Esophagus squamous epithelium (tissue), 5 donors: ENCODE measurements at regions of chr13 and their contacts with region 1.

Region 1: DNA sequence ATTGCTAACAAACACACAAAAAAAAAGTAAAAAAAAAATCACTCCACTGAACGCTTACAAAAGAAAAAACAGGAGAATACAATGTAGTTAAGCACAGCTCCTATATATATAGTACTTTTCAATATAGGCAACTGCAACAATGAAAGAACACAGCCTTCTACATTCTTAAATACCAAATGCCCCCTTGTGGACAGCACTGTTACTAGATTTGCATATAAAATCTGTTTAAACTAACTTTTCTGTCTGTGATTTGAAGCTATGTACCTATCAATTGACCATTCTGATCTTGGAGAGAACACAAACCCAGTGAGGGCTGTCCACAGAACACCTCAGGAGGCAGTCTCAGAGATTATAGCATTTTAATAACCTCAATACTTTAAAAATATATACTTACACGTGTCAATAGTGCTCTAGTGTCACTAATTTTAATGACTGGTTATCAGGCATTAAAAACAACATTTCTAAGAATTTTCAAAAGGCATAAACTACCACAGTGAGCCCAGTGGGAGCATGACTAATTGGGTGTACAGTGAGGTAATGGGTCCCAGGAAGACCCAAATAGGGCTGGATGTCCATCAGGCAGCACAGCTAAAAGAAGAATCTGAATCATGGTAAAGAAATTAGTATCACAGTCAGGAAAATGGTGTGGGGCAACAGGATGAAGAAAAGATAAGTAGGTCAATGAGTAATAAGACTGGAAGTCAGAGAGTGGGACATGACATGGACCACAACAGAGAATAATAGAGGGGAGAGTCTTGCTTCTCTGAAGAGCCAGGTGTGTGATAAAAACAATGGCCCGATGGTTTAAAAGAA is 22.2 kb downstream of the CCDC169 start:
- DNase-seq: no peak
- H3K4me3 ChIP-seq: no peak overlapping the region
- H3K27ac ChIP-seq: no peak overlapping the region
- H3K4me1 ChIP-seq: no peaks in the 10 kb centered on the region
- H3K27me3 ChIP-seq: no peaks in the 10 kb centered on the region
- CTCF ChIP-seq: peak in 5 of 6 experiments; percentile 42 to 72 (median 53)
- POLR2A ChIP-seq: no peak

Region 2: DNA sequence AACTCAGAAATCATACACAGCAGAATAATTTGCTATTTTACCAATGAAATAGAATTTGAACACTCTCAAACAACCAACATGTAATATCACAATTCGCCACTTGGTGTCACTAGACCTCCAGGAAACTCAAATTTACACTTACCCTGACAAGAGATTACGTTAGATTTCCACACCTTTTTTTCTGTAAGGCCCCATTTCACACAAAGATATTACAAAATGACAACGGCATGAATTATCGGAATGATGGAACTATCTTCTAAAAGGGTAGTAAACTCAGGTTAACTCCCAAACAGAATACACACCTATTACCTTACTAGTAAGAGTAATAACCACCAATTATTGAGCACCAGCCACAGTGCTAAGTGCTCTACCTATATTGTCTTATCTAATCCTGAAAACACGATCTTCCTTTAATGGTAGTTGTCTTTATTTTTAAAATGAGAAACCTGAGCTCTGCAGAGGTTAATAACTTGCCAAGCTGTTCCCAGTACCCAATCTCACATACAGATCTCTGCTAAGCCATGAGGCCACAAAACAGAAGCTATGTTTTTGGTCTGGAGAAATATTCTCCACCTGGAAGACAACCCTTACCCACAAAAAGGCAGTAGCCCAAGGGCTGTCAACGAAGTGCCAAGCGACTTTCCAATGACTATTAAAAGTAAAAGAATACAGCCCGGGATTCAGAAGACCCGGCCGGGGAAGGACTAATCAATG is 296.6 kb before region 1 on chr13:
- intact Hi-C with region 1: loop called (anchors 2 kb)
- DNase-seq: no peak
- H3K4me3 ChIP-seq: no peak overlapping the region
- H3K27ac ChIP-seq: peak overlapping the region; percentile 56 to 82 (median 71)
- H3K4me1 ChIP-seq: peaks cover 0 to 19% (median 12%) of the 10 kb centered on the region in 3 donors
- H3K27me3 ChIP-seq: no peaks in the 10 kb centered on the region
- CTCF ChIP-seq: peak; percentile 35 to 88 (median 77)
- POLR2A ChIP-seq: no peak

Region 3: DNA sequence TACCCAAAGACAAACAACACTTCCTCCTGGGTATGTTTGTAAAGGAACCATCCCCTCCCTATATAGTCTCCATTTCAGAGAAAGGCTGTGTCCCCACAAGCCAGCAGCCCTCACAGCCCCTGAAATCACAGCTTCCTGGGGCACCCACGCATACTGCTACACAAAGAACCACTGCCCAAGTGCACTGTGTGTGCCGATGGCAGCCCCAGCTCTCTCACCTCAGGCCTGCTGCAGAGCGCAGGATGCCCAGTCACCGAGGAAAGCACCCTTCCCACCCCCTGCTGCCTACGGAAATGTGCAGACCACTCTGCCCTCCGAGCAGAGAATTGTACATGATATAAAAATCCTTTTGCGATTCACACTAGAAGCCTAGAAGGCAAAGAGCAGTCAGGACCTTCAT is 100.5 kb before region 1 on chr13:
- intact Hi-C with region 1: no loop called
- DNase-seq: no peak
- H3K4me3 ChIP-seq: no peak overlapping the region
- H3K27ac ChIP-seq: no peak overlapping the region
- H3K4me1 ChIP-seq: no peaks in the 10 kb centered on the region
- H3K27me3 ChIP-seq: peaks cover 0 to 8% (median 0%) of the 10 kb centered on the region in 4 donors
- CTCF ChIP-seq: no peak
- POLR2A ChIP-seq: no peak

Region 4: GRCh38 chr13:36490055-36490454 is 214.7 kb after region 1 on chr13:
- intact Hi-C with region 1: no loop called
- DNase-seq: no peak
- H3K4me3 ChIP-seq: no peak overlapping the region
- H3K27ac ChIP-seq: no peak overlapping the region
- H3K4me1 ChIP-seq: no peaks in the 10 kb centered on the region
- H3K27me3 ChIP-seq: no peaks in the 10 kb centered on the region
- CTCF ChIP-seq: no peak
- POLR2A ChIP-seq: no peak